HEK293 (cell line): ENCODE measurements at regions of chr19 and their contacts with region 1.

Region 1: DNA sequence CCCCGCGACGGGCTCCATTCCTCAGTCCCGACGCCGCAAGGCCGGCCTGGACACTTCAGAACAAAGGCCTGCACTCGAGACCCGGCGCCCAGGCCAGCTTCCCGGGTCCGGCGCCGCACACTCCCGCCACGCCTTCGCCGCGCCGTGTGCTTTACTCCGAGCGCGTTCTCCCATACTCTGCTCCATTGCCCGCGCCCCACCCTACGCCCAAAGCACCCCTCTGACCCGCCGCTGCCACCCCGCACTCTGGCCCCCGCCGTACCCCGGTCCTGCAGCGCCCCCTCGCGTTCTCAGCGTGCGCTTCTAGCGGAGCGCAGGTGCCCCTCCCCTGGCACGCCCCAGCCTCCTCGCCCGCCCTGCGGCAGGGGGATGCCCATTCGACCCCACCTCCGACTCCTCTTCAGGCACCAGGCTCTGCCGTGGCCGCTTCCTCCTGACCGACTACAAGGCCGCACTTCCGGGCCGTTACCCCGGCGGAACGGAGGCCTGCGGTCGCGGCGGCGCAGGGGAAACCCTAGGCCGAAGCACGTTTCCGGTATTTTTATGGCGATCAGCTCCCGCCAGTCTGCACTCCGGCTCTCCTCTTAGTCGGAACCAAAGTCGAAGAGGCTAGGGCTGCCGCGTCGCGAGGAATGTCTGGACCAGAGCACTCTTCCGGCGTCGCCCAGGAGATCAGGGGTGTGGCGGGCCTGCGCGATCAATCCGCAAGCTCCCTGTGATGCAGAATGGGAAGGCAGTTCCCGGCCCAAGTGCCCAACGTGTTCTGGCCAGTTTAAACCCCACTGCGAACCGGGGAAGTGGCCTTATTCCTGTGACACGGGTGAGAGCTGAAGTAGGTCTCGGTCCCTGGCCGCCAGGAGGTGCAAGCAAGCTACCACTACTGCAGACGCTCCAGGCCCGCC is at the start of gene ZBTB45:
- H3K4me3 ChIP-seq: peak within 1 kb of the TSS; percentile 74
- H3K27ac ChIP-seq: peak within 1 kb of the TSS; percentile 94
- H3K4me1 ChIP-seq: peaks cover 10% of the 10 kb centered on the region
- CTCF ChIP-seq: peak; percentile 99

Region 2: DNA sequence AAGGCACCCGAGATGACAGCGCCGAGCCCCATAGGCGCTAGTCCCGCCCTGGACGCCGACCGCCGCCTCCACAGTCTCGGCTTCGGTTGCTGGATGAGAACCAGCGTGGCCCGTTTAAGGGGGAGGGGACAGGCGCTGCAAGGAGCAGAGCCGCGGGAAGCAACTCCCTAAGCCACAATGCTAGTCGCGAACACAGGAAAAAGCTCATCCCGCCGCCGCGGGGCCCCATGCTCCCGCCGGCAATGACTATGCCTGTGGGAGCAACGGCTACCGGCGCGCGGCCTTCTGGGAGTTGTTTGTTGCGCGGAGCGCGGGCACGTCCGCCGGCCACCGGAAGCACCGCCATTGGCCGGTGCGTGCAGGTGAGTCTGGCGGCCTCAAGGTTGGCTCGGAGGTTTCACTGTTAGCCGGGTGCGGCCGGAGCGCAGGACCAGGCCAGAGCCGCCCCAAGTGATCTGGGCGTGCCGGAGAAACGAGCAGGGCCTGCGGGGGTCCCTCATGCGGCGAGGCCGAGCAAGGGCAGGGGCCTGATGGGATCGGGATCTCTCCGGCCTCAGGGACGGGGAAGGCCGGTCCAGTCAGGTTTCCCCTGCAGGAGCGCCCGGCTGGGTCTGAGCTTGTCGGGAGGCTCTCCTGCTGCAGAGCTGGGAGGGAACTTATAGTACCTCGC is 290.9 kb before region 1 on chr19 and contains the start of gene ZNF544:
- CTCF ChIA-PET with region 1: interaction called, 5 read pairs
- POLR2A ChIA-PET with region 1: interaction called, 12 read pairs
- H3K4me3 ChIP-seq: peak within 1 kb of the TSS; percentile 93
- H3K27ac ChIP-seq: peak within 1 kb of the TSS; percentile 90
- H3K4me1 ChIP-seq: no peaks in the 10 kb centered on the region
- CTCF ChIP-seq: peak; percentile 21

Region 3: GRCh38 chr19:58408152-58409009 is 111.2 kb before region 1 on chr19 and contains the start of gene ZNF584:
- CTCF ChIA-PET with region 1: interaction called, 5 read pairs
- POLR2A ChIA-PET with region 1: interaction called, 24 read pairs
- H3K4me3 ChIP-seq: peak within 1 kb of the TSS; percentile 98
- H3K27ac ChIP-seq: peak within 1 kb of the TSS; percentile 76
- H3K4me1 ChIP-seq: peaks cover 4% of the 10 kb centered on the region; the same call in 1 of the 2 replicates
- CTCF ChIP-seq: peak; percentile 76

Region 4: DNA sequence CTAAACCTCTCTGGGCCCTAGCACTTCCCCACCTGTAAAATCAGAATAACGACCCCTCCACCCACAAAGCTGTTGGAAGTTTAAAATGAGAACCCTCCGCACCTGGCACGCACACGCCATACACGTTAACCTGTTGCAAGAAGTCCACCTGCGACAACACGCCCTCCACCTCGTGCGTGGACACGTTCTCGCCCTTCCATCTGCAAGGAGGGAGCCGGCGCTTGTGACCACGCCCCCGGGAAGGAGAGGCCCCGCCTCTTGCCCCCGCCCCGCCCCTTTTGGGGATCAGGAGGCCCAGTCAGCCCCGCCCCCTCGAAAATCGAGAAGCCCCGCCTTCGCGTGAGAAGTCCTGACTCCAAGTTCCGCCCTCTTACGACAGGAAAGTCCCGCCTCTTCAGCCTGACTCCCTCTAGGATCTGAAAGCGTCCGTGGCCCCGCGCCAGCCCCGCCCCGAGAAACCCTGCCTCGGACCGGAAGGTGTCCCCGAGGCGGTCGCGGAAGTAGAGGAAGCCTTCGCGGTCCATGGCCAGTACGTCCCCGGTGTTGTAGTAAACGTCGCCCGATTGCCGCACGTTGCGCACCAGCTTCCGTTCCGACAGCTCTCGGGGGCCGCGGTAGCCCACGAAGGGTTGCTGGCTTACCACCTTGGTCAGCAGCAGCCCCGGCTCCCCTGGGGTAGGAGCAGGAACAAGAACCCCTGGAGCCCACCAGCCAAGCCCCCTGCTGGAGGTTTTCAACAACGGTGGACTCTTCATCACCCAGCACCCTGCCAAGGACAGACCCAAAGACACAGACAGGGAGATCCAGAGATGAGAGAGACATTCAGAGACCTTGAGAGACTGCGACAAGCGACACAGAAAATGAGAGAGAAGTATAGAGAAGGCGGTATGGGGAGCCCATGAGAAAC is 20.3 kb before region 1 on chr19:
- CTCF ChIA-PET with region 1: interaction called, 26 read pairs
- POLR2A ChIA-PET with region 1: interaction called, 14 read pairs
- H3K4me3 ChIP-seq: peak overlapping the region; percentile 38
- H3K27ac ChIP-seq: peak overlapping the region; percentile 68
- H3K4me1 ChIP-seq: peaks cover 9% of the 10 kb centered on the region
- CTCF ChIP-seq: 0 out of 2 replicates have a peak, but pooled peaks have one; percentile 24

Region 5: DNA sequence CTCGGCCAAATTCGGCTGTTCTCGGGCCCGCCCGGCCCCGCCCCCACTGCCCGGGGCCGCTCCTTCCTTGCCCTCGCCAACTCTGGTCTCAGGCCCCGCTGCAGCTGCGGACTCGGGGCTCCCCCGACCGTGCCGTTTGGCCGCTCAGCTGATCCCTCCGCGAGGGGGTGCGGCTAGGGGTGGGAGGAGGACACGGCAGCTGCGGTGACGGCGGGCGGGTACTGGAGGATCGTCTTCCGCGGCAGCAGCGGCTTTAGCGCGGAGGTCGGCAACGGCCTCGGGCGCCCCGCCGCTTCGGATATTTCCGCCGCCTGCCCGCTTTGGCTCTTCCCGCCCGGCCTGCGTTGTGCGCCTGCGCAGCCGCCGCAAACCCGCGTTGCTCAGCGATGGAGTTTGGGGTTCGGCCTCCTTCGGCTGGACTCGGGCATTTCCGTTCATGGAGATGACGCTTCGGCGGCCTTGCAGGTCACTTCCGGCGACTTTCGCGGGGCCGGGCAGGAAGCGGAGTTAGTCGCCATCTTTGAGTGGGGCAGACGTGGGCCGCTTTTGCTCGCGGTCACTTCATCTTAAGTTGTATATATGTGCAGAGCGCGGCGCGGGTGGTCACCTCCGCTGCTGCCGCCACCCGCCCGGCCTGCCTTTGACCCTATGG is 39.1 kb after region 1 on chr19:
- CTCF ChIA-PET with region 1: interaction called, 20 read pairs
- POLR2A ChIA-PET with region 1: interaction called, 80 read pairs
- H3K4me3 ChIP-seq: peak overlapping the region; percentile 89
- H3K27ac ChIP-seq: peak overlapping the region; percentile 99
- H3K4me1 ChIP-seq: peaks cover 17% of the 10 kb centered on the region
- CTCF ChIP-seq: no peak